Naive thymus-derived CD4-positive, alpha-beta T cell (primary cell): ENCODE measurements at regions of chr1 and their contacts with region 1.

Region 1: DNA sequence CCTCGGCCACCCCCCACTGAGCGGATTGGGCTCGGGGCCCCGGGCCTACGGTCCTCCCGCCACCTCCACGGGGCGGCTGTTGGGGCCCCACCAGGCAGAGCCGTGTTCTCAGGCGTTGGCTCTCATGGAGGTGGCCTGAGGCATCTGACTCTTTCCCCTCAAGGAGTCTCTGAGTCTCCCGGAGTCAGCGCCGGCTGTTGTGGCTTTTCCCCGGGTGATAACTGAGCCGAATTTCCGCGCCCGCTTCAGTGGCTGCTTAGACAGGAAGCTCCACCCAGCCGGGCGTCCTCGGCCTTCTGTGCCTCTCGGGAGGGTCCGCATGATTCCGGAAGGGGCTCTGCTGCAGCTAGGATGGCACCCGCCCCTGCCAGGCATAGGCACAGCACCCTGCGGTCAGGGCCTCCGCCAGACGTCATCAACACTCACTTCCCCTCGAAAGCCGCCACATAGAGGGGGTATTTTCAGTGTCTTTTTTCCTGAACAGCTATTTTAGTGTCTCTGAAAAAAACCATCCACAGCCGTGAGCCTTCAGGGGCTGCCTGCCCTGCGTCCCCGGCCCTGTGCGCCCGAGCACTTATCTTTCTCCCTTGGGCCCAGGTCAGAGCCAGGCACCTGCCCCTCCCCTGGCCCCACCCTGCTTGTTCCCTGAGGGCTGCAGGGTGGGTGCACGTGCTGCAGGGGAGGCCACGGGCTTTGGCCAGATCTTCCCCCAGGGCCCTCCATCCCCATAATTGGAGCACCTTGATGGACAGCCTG is 72.9 kb downstream of the SKI start:
- DNase-seq: peak; percentile 69 to 98 (median 97)
- ATAC-seq: peak; percentile 90
- H3K4me3 ChIP-seq: peak overlapping the region; percentile 77
- H3K4me3 Mint-ChIP-seq: peak overlapping the region; percentile 79 to 89 (median 85)
- H3K27ac ChIP-seq: peak overlapping the region; percentile 98
- H3K27ac Mint-ChIP-seq: peak overlapping the region; percentile 91 to 99 (median 99)
- H3K4me1 ChIP-seq: peaks cover 36 to 54% of the 10 kb centered on the region in 2 donors
- H3K4me1 Mint-ChIP-seq: peaks cover 14 to 72% (median 42%) of the 10 kb centered on the region in 7 donors
- H3K27me3 ChIP-seq: no peaks in the 10 kb centered on the region
- H3K27me3 Mint-ChIP-seq: no peaks in the 10 kb centered on the region

Region 2: GRCh38 chr1:1919304-1920056 is 381.5 kb before region 1 on chr1:
- CTCF ChIA-PET with region 1: no interaction called
- POLR2A ChIA-PET with region 1: no interaction called
- intact Hi-C with region 1: loop called in 1 of 2 experiments (anchors 5 kb)
- DNase-seq: peak; percentile 99 to 100 (median 100)
- ATAC-seq: peak; percentile 95
- H3K4me3 ChIP-seq: peak overlapping the region; percentile 61
- H3K4me3 Mint-ChIP-seq: peak overlapping the region; percentile 52 to 79 (median 68)
- H3K27ac ChIP-seq: peak overlapping the region; percentile 58
- H3K27ac Mint-ChIP-seq: peak overlapping the region in 8 of 9 donors; percentile 51 to 89 (median 82)
- H3K4me1 ChIP-seq: peaks cover 7 to 16% of the 10 kb centered on the region in 2 donors
- H3K4me1 Mint-ChIP-seq: peaks cover 0 to 7% (median 0%) of the 10 kb centered on the region in 7 donors
- H3K27me3 ChIP-seq: no peaks in the 10 kb centered on the region
- H3K27me3 Mint-ChIP-seq: peaks cover 0 to 4% (median 0%) of the 10 kb centered on the region in 5 donors

Region 3: DNA sequence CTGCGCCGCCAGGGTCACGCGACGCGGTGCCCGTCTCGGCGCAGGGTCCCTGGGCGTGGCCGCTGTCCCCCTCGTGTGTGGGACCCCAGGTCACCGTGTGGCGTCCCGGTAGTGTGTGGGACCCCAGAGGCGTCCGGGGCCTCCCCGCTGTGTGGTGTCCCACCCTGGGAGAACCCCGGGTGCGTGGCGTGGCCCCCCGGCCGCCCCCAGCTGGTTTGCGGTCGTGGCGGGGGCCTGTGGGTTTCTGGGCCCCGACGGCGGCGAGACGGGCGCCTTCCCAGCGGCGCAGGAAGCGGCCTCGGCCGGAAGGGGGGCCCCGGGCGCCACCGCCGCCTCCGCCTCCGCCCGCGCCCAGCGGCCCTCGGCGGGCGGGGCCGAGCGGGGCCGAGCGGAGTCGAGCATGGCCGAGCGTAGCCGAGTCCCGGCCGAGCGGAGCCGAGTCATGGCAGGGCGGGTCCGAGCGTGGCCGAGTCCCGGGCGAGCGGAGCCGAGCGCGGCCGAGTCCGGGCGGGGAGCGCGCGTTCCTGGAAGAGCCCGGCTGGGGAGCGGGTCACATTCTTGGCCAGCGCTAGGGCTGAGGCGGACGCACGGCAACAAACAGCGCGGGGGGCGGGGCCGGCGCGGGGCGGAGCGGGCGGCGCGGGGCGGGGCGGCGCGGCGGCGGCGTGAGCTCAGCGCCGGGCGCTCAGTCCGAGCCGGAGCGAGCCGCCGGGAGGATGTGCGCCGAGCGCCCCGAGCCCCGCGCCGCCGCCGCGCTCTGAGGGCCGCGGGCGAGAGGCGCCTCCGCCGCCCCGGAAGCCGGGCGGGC is 73.5 kb before region 1 on chr1:
- CTCF ChIA-PET with region 1: interaction called, 5 read pairs
- POLR2A ChIA-PET with region 1: interaction called, 45 read pairs
- intact Hi-C with region 1: loop called in 1 of 2 experiments (anchors 1 kb)
- DNase-seq: peak; percentile 87 to 98 (median 97)
- ATAC-seq: peak; percentile 88
- H3K4me3 ChIP-seq: peak overlapping the region; percentile 33
- H3K4me3 Mint-ChIP-seq: peak overlapping the region in 9 of 10 donors; percentile 56 to 83 (median 69)
- H3K27ac ChIP-seq: peak overlapping the region; percentile 72
- H3K27ac Mint-ChIP-seq: peak overlapping the region in 4 of 9 donors; percentile 26 to 80 (median 62)
- H3K4me1 ChIP-seq: peaks cover 5 to 14% of the 10 kb centered on the region in 2 donors
- H3K4me1 Mint-ChIP-seq: peaks cover 9 to 24% (median 17%) of the 10 kb centered on the region in 7 donors
- H3K27me3 ChIP-seq: no peaks in the 10 kb centered on the region
- H3K27me3 Mint-ChIP-seq: peaks cover 0 to 8% (median 0%) of the 10 kb centered on the region in 5 donors

Region 4: DNA sequence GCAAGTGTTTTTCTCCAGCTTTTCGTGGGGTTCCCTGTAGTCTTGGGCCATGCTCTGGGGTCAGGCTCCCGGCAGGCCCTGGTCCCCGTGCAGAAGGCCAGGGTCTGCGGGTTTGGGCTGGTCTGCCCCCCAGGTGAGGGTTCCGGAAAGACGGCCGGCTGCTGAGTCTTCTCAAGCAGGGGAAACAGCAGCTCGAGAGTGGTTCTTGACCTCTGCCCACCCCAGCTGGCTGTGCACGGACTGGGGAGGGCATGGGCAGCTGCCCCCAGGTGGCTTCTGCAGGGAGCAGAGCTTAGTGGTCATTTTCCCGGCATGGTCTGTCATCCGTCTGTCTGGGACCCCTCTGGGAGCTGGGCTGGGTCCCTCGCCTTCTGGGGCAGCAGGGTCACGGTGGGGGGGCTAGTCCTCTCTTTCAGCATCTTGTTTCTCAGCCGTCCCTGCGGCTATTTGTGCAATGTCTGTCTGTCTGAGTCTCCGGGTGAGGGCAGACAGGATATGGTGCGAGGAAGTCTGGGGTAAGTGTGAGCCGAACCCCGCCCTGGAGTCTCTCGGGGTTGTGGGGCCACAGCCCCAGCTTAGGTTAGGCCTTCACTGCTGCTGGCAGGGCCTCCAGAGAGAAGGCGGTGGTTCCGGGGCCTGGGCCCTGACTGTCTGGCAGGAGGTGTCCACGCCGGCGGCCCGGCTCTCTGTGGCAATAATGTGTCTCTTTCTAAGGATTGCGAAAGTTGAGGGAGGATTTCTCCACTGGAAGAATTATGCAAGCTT is 66.8 kb before region 1 on chr1:
- CTCF ChIA-PET with region 1: interaction called, 5 read pairs
- POLR2A ChIA-PET with region 1: interaction called, 45 read pairs
- intact Hi-C with region 1: loop called (anchors 1 kb)
- DNase-seq: peak; percentile 52 to 82 (median 72)
- ATAC-seq: peak; percentile 80
- H3K4me3 ChIP-seq: peak overlapping the region; percentile 83
- H3K4me3 Mint-ChIP-seq: peak overlapping the region; percentile 89 to 100 (median 94)
- H3K27ac ChIP-seq: peak overlapping the region; percentile 78
- H3K27ac Mint-ChIP-seq: peak overlapping the region; percentile 90 to 99 (median 97)
- H3K4me1 ChIP-seq: peaks cover 64 to 78% of the 10 kb centered on the region in 2 donors
- H3K4me1 Mint-ChIP-seq: peaks cover 50 to 70% (median 61%) of the 10 kb centered on the region in 7 donors
- H3K27me3 ChIP-seq: no peaks in the 10 kb centered on the region
- H3K27me3 Mint-ChIP-seq: no peaks in the 10 kb centered on the region

Region 5: DNA sequence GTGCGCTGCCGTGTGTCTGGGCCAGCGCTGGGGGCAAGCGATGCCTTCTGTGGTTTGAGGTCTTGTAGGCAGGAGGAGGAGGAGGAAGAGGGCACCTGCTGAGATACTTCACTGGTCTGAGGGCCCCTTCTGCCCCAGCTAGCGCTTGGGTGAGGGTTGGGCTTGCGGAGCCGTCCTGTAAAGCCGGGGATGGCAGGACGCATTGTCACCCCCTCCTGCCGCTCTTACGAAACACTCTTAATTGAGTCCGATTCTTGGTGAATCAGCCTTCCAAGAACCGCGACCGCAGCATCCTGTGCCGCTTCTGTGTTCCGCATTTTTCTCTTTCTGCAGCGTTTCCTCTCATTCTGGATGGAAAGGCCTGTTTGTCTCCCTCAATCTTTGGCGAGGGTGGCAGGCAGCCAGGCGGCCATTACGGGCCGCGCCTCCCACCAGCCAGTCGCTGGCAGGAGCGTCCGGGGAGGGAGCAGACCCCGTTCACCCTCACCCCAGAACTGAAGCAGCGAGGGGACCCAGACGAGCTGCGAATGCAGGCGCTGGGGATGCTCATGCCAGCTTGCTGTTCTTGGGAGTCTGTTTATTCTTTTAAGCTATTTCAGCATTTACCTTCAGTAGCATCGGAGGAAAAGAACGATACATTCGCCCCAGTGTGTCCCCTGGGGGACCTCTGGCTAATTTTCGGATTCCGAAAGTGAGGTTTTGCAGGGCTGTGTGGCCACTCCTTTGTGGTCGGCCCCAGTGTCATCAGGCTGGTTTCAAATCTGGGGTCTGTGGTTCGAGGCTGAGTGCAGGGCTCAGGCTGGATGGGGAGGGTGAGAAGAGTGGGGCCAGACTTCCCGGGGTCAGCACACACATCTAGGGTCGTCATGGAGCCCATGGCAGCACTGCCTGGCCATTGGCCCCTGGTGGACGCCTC is 10.2 kb before region 1 on chr1:
- CTCF ChIA-PET with region 1: no interaction called
- POLR2A ChIA-PET with region 1: interaction called, 37 read pairs
- intact Hi-C with region 1: loop called (anchors 1 kb)
- DNase-seq: peak; percentile 44 to 83 (median 79)
- ATAC-seq: peak; percentile 82
- H3K4me3 ChIP-seq: peak overlapping the region; percentile 52
- H3K4me3 Mint-ChIP-seq: peak overlapping the region; percentile 81 to 94 (median 88)
- H3K27ac ChIP-seq: peak overlapping the region; percentile 68
- H3K27ac Mint-ChIP-seq: peak overlapping the region; percentile 95 to 97 (median 96)
- H3K4me1 ChIP-seq: peaks cover 49 to 91% of the 10 kb centered on the region in 2 donors
- H3K4me1 Mint-ChIP-seq: peaks cover 51 to 98% (median 79%) of the 10 kb centered on the region in 7 donors
- H3K27me3 ChIP-seq: no peaks in the 10 kb centered on the region
- H3K27me3 Mint-ChIP-seq: no peaks in the 10 kb centered on the region

Region 6: DNA sequence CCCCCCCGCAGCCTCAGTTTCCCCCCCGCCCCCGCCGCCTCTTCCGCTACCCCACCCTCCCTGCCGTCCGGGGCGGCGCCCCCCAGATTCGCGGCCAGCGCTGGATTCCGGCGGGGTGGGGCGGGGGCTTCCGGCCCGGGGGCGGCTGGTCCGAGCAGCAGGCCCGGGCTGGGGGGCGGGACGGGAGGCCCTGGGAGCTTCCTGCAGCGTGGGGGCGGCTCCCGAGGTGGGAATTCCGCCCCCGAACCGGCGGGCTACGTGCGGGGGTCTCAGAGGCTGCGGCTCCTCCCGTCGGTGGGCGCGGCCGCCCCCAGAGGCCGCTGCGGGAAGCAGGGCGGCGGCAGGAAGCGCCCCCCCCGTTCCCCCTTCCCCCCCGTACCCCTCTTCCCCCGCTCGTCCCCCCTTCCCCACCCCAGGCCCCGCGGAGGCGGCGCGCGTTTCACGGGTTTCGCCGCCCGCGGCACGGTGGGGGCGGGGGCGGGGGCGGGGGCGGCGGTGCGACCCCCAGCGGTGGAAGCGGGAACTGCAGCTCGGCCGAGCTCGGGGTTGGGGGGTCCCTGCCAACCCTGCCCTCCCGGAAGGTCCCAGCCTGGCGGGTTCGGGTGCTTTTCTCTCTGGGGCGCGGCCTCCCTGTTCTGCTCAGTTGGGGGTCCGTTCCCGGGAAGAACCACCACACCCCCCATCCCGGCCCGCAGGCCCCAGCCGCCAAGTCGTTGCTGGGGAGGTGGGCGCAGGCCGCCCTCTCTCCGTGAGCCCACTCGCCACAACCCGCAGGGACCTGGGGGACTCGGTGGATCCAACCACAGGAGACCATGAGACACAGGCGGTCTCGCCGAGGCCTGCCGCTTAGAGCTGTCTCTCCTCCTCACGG is 14.0 kb after region 1 on chr1:
- CTCF ChIA-PET with region 1: interaction called, 6 read pairs
- POLR2A ChIA-PET with region 1: interaction called, 7 read pairs
- intact Hi-C with region 1: loop called (anchors 1 kb)
- DNase-seq: peak; percentile 56 to 77 (median 70)
- ATAC-seq: peak; percentile 81
- H3K4me3 ChIP-seq: peak overlapping the region; percentile 55
- H3K4me3 Mint-ChIP-seq: peak overlapping the region in 9 of 10 donors; percentile 12 to 73 (median 64)
- H3K27ac ChIP-seq: peak overlapping the region; percentile 84
- H3K27ac Mint-ChIP-seq: peak overlapping the region in 8 of 9 donors; percentile 38 to 86 (median 65)
- H3K4me1 ChIP-seq: peaks cover 29 to 42% of the 10 kb centered on the region in 2 donors
- H3K4me1 Mint-ChIP-seq: peaks cover 3 to 19% (median 12%) of the 10 kb centered on the region in 7 donors
- H3K27me3 ChIP-seq: no peaks in the 10 kb centered on the region
- H3K27me3 Mint-ChIP-seq: no peaks in the 10 kb centered on the region

Region 7: GRCh38 chr1:2468041-2468472 is 167.0 kb after region 1 on chr1:
- CTCF ChIA-PET with region 1: no interaction called
- POLR2A ChIA-PET with region 1: no interaction called
- intact Hi-C with region 1: no loop called
- DNase-seq: peak in 8 of 9 donors; percentile 24 to 54 (median 34)
- ATAC-seq: no peak
- H3K4me3 ChIP-seq: no peak overlapping the region
- H3K4me3 Mint-ChIP-seq: peak overlapping the region in 1 of 10 donors; percentile 23
- H3K27ac ChIP-seq: no peak overlapping the region
- H3K27ac Mint-ChIP-seq: no peak overlapping the region
- H3K4me1 ChIP-seq: peaks cover 0 to 13% of the 10 kb centered on the region in 2 donors
- H3K4me1 Mint-ChIP-seq: peaks cover 0 to 8% (median 0%) of the 10 kb centered on the region in 7 donors
- H3K27me3 ChIP-seq: no peaks in the 10 kb centered on the region
- H3K27me3 Mint-ChIP-seq: peaks cover 0 to 5% (median 5%) of the 10 kb centered on the region in 5 donors